ENCODE measurements at regions of chr6 and their contacts with region 1.

Region 1: GRCh38 chr6:24910961-24911712 is 24.6 kb downstream of the RIPOR2 start:
- DNase-seq: peak; percentile 69
- ATAC-seq: peak; percentile 50
- H3K4me3 Mint-ChIP-seq: peak overlapping the region; percentile 78
- H3K27ac Mint-ChIP-seq: no peak overlapping the region
- H3K4me1 Mint-ChIP-seq: peaks cover 34% of the 10 kb centered on the region
- H3K27me3 Mint-ChIP-seq: peaks cover 51% of the 10 kb centered on the region
- CTCF ChIP-seq: no peak

Region 2: GRCh38 chr6:24899997-24900325 is 11.2 kb before region 1 on chr6:
- CTCF ChIA-PET with region 1: interaction called, 12 read pairs
- POLR2A ChIA-PET with region 1: no interaction called
- DNase-seq: no peak
- ATAC-seq: no peak
- H3K4me3 Mint-ChIP-seq: no peak overlapping the region
- H3K27ac Mint-ChIP-seq: no peak overlapping the region
- H3K4me1 Mint-ChIP-seq: peaks cover 23% of the 10 kb centered on the region
- H3K27me3 Mint-ChIP-seq: no peaks in the 10 kb centered on the region
- CTCF ChIP-seq: no peak

Region 3: GRCh38 chr6:24933868-24934401 is 22.8 kb after region 1 on chr6:
- CTCF ChIA-PET with region 1: interaction called, 59 read pairs
- POLR2A ChIA-PET with region 1: interaction called, 6 read pairs
- DNase-seq: peak; percentile 61
- ATAC-seq: peak; percentile 81
- H3K4me3 Mint-ChIP-seq: peak overlapping the region; percentile 32
- H3K27ac Mint-ChIP-seq: 0 out of 2 replicates have a peak overlapping the region, but pooled peaks have one; percentile 33
- H3K4me1 Mint-ChIP-seq: peaks cover 66% of the 10 kb centered on the region
- H3K27me3 Mint-ChIP-seq: no peaks in the 10 kb centered on the region
- CTCF ChIP-seq: peak; percentile 79

Region 4: GRCh38 chr6:24980507-24981387 is 69.6 kb after region 1 on chr6:
- CTCF ChIA-PET with region 1: interaction called, 14 read pairs
- POLR2A ChIA-PET with region 1: no interaction called
- DNase-seq: peak; percentile 23
- ATAC-seq: peak; percentile 84
- H3K4me3 Mint-ChIP-seq: peak overlapping the region; percentile 34
- H3K27ac Mint-ChIP-seq: peak overlapping the region; percentile 100
- H3K4me1 Mint-ChIP-seq: peaks cover 86% of the 10 kb centered on the region
- H3K27me3 Mint-ChIP-seq: no peaks in the 10 kb centered on the region
- CTCF ChIP-seq: no peak